OCI-LY7 (cell line): ENCODE measurements at regions of chr12 and their contacts with region 1.

Region 1: GRCh38 chr12:69738351-69739286 is at the start of gene RAB3IP:
- DNase-seq: peak; percentile 94
- H3K4me3 ChIP-seq: peak within 1 kb of the TSS; percentile 82
- H3K27ac ChIP-seq: peak within 1 kb of the TSS; percentile 73
- H3K4me1 ChIP-seq: peaks cover 20% of the 10 kb centered on the region
- CTCF ChIP-seq: peak; percentile 70
- total RNA-seq, gene RAB3IP: 49.0 and 74.9 TPM in 2 replicates

Region 2: GRCh38 chr12:69585189-69586062 is 153.2 kb before region 1 on chr12 and contains the start of gene CCT2:
- CTCF ChIA-PET with region 1: no interaction called
- POLR2A ChIA-PET with region 1: interaction called, 4 read pairs
- intact Hi-C with region 1: loop called (anchors 5 kb)
- DNase-seq: peak; percentile 99
- H3K4me3 ChIP-seq: peak within 1 kb of the TSS; percentile 91
- H3K27ac ChIP-seq: peak within 1 kb of the TSS; percentile 79
- H3K4me1 ChIP-seq: peaks cover 12% of the 10 kb centered on the region
- CTCF ChIP-seq: peak; percentile 62
- total RNA-seq, gene CCT2: 248 and 264 TPM in 2 replicates

Region 3: DNA sequence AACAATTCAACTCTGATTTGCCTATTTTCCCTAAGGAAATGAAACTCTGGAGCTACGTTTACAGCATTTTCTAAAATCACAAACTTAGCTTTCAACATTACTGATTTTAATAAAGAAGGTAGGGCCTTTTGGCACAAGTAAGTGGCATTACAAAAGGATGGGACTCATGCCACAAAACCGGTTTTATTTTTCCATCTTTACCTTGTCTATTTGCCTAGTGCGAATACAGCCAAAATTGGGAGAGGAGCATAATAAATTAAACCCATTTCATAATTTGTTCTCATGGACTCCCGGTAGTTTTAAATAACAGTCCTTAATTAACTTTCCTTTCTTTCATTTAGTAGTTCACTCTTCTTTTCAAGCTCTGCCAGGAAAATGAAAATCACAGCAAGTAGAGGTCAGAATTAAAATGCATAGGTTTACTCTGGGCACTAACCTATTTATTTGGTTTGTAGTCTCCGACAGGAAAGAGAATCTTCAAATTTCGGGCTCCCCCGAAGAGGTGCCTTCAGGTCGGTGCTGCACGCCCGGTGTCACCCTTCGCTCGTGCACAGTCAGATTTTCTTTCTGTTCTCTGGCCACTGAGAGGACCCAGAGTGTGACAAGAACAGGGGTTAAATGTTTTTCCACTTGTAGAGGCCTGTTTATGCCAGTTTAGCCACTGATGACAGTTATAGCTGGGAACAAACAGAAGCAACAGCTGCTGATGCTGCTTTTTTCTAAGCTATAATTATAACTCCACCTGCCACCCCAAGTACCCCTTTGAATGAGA is 39.7 kb before region 1 on chr12 and contains the start of gene BEST3:
- CTCF ChIA-PET with region 1: no interaction called
- POLR2A ChIA-PET with region 1: interaction called, 5 read pairs
- intact Hi-C with region 1: loop called (anchors 1 kb)
- DNase-seq: peak; percentile 92
- H3K4me3 ChIP-seq: peak within 1 kb of the TSS; percentile 95
- H3K27ac ChIP-seq: peak within 1 kb of the TSS; percentile 98
- H3K4me1 ChIP-seq: peaks cover 52% of the 10 kb centered on the region
- CTCF ChIP-seq: no peak
- total RNA-seq, gene BEST3: 105 and 123 TPM in 2 replicates